ENCODE measurements at regions of chr18 and their contacts with region 1.

Region 1: DNA sequence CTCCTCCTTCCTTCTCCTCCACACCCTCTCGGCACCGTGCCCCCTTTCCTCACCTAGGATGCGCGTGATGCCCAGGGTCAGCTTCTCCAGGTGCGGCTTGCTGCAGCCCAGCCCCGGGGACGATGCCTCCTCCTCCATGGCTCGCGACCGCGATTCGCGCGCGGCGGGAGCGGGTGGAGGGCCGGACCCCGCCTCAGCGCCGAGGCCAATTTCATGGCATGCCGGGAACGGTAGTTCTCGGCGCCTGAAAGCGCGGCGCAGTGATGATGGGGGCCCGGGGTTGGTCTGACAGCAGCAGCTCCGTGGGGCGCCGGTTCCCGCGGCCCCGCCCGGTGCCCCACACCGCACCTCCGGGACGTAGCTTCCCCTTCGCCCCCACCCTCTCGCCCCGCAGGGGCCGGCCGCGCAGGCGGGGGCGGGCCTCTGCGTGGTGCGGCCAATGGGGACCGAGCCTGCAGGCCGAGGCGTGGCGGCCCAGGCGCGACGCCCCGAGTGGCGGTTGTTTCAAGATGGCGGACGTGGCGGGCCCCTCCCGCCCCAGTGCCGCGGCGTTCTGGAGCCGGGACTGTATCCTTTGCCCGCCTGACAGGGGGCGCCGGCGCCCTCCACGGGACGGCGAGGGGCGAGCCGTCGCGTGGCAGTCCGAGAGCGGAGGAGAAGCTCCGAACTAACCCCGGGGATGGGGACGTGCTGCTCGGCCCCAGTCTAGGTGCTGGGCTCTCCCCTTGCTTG is at the starts of genes KIAA1328 and TPGS2:
- DNase-seq: peak; percentile 85 to 91 (median 90)
- H3K4me3 ChIP-seq: peak within 1 kb of the TSS; percentile 94 to 99
- H3K4me3 Mint-ChIP-seq: peak within 1 kb of the TSS; percentile 84 to 97 (median 90)
- H3K27ac ChIP-seq: peak within 1 kb of the TSS; percentile 82
- H3K27ac Mint-ChIP-seq: peak within 1 kb of the TSS; percentile 80 to 96 (median 94)
- H3K4me1 ChIP-seq: peaks cover 26% of the 10 kb centered on the region
- H3K4me1 Mint-ChIP-seq: peaks cover 22 to 55% (median 36%) of the 10 kb centered on the region in 4 donors
- H3K27me3 ChIP-seq: no peaks in the 10 kb centered on the region
- H3K27me3 Mint-ChIP-seq: no peaks in the 10 kb centered on the region
- total RNA-seq, gene KIAA1328: 12.3 to 15.7 TPM
- total RNA-seq, gene TPGS2: 51.6 to 54.7 TPM

Region 2: DNA sequence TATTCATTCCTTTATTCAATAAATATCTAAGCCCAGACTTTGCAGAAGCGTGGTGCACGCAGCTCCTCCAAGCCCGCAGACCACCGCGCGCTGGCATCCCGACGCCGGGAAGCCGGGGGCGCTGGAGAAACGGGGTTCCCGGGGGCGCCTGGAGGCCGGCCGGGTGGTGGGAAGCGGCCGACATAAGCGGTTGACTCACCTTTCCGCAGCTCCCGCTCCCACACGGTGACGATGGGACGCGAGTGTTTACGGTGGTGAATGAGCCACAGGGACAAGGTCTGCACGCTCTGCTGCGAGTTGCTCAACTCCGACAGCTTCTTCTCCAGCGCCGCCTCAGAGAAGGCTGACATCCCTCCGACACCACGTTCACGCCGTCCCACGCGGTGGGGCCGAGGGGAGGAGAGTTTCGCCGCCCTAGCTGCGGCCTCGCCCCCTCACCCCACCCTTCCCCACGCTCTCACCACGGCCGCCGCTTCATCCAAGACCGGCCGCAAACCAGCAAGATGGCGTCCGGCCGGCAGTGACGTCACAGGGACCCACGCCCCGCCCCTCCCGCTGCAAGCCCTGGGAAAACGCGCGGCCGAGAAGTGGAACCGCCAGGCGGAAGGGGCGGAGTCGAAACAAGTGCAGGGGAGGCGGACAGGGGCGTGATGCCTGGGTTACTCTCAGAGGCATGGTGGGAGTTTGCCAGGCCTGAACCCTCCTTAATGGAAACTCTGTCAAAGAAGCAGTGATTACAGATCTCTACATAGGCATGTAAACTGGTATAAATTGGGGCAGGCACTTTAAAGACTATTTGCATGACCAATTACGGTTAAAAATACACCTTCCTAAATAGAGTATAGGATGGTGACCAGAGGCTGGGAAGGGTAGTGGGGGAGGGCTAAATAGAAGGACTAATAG is 761.5 kb before region 1 on chr18 and contains the start of gene RPRD1A:
- CTCF ChIA-PET with region 1: no interaction called
- POLR2A ChIA-PET with region 1: interaction called, 4 read pairs
- intact Hi-C with region 1: loop called (anchors 5 kb)
- DNase-seq: peak; percentile 94 to 97 (median 94)
- H3K4me3 ChIP-seq: peak within 1 kb of the TSS; percentile 81 to 87
- H3K4me3 Mint-ChIP-seq: peak within 1 kb of the TSS; percentile 92 to 98 (median 95)
- H3K27ac ChIP-seq: peak within 1 kb of the TSS; percentile 74
- H3K27ac Mint-ChIP-seq: peak within 1 kb of the TSS; percentile 89 to 98 (median 96)
- H3K4me1 ChIP-seq: peaks cover 32% of the 10 kb centered on the region
- H3K4me1 Mint-ChIP-seq: peaks cover 31 to 48% (median 40%) of the 10 kb centered on the region in 4 donors
- H3K27me3 ChIP-seq: no peaks in the 10 kb centered on the region
- H3K27me3 Mint-ChIP-seq: peaks cover 0 to 1% of the 10 kb centered on the region in 2 donors
- total RNA-seq, gene RPRD1A: 40.1 to 42.3 TPM

Region 3: DNA sequence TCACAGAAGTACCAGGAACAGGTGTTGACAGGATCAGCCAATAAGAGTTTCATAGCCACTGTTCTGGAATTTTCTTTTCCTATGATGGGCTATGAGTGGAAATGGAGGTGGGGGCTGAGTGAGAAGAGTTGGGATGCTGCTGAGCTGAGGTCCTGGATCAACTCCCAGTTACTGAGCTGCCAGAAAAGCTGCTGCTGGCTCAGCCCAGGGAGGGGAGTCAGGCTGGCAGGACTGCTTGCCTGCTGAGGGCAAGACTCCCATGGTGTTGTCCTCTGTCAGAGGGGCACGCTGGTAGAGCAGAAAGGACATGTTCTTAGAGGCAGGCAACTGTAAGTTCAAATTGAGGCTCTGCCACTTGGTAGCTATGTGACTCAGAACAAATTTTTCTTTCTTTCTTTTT is 11.8 kb before region 1 on chr18:
- CTCF ChIA-PET with region 1: interaction called, 22 read pairs
- POLR2A ChIA-PET with region 1: interaction called, 9 read pairs
- intact Hi-C with region 1: loop called (anchors 2 kb)
- DNase-seq: no peak
- H3K4me3 ChIP-seq: no peak overlapping the region
- H3K4me3 Mint-ChIP-seq: no peak overlapping the region
- H3K27ac ChIP-seq: no peak overlapping the region
- H3K27ac Mint-ChIP-seq: peak overlapping the region in 3 of 7 donors; percentile 50 to 70 (median 57)
- H3K4me1 ChIP-seq: no peaks in the 10 kb centered on the region
- H3K4me1 Mint-ChIP-seq: peaks cover 10 to 19% (median 13%) of the 10 kb centered on the region in 4 donors
- H3K27me3 ChIP-seq: no peaks in the 10 kb centered on the region
- H3K27me3 Mint-ChIP-seq: no peaks in the 10 kb centered on the region